ENCODE measurements at regions of chr5 and their contacts with region 1.

Region 1: DNA sequence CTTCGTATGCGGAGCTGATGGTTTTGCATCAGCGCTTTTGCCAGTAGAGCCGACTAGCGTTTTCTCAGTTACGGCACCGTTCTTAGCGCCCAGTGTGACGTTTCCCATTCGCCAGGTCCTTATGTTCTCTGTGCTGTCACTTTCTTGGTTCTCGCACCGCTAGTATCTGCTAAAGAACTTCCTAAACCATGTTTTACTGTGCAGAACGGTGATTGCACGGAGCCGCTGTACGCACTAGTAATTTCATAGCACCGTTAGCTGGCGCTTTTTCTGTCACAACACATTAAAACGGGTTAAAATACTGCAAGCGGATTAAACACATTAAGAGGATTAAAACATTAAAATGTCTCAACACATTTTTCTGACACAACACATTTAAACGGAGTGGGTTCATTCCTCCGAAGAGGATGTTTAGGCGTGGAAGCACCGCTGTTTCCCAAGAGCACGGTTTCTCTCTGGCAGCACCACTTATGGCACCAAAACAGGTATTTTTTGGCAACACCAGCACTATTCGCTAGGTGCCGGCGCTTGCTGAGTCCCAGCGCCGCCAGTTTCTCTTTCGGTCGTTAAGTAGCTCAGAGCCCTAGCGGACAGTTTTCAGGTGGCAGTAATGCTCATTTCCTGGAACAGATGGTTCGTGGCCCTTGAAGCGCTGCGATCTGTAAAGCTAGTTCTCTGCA is 20.4 kb downstream of the ANXA2R start:
- DNase-seq: peak; percentile 67
- CTCF ChIP-seq: peak; percentile 33

Region 2: GRCh38 chr5:43008369-43009153 is 11.2 kb before region 1 on chr5:
- CTCF ChIA-PET with region 1: interaction called, 68 read pairs
- POLR2A ChIA-PET with region 1: interaction called, 12 read pairs
- DNase-seq: peak; percentile 73
- CTCF ChIP-seq: peak; percentile 32

Region 3: GRCh38 chr5:43061352-43062075 is 41.8 kb after region 1 on chr5:
- CTCF ChIA-PET with region 1: interaction called, 18 read pairs
- POLR2A ChIA-PET with region 1: interaction called, 3 read pairs
- DNase-seq: no peak
- CTCF ChIP-seq: no peak

Region 4: DNA sequence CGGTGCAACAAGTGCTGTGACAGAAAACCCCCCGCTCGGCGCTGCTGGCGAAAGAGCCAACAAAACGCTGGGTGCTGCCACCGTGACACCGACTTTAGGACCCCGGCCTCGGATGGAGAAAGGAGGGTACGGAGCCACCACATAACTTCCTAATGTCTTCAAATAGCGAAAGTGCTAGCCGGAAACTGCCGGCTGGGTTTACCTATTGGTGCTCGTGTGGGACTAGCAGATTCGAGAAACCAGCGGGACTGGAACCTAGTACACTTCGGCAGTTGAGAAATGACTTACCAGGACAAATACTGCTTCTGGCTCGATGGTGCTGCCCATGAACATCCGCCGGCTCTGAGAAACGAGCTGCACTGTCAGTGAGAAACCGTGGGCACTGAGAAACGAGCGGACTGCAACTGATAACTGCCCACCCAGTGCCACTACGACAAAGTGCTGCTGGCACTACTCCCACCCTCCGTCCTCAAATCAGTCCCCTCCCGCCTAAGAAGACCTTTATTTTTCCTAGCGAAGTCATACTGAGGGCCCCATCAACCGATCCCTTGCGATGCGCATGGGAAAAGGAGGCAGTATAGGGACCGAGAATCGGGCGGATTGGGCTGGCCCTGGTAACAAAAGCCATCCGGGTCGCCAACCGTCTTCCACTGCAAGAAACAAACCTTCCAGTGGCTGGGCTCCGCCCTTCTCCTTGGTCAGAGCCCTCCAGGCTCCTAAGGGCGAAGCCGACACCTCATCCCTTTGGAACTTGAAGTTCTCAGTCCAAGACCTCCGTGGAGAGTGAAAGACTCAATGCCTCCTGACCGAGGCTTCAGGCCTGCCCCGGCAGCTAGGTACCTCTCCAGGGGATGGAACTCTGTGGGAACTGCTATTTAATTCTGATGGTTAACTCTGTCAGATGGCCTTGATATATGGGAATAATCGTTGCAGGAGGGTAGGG is 47.3 kb after region 1 on chr5:
- CTCF ChIA-PET with region 1: interaction called, 18 read pairs
- POLR2A ChIA-PET with region 1: interaction called, 3 read pairs
- DNase-seq: peak; percentile 74
- CTCF ChIP-seq: no peak

Measured in GM10248 (cell line).